Posterior vena cava (tissue), 2 donors: ENCODE measurements at regions of chr1 and their contacts with region 1.

Region 1: GRCh38 chr1:84758968-84759491 is 68.8 kb upstream of the SSX2IP start:
- DNase-seq: no peak

Region 2: GRCh38 chr1:82819234-82819633 is 1939.8 kb before region 1 on chr1:
- intact Hi-C with region 1: loop called in 1 of 2 experiments (anchors 5 kb)
- DNase-seq: no peak

Region 3: DNA sequence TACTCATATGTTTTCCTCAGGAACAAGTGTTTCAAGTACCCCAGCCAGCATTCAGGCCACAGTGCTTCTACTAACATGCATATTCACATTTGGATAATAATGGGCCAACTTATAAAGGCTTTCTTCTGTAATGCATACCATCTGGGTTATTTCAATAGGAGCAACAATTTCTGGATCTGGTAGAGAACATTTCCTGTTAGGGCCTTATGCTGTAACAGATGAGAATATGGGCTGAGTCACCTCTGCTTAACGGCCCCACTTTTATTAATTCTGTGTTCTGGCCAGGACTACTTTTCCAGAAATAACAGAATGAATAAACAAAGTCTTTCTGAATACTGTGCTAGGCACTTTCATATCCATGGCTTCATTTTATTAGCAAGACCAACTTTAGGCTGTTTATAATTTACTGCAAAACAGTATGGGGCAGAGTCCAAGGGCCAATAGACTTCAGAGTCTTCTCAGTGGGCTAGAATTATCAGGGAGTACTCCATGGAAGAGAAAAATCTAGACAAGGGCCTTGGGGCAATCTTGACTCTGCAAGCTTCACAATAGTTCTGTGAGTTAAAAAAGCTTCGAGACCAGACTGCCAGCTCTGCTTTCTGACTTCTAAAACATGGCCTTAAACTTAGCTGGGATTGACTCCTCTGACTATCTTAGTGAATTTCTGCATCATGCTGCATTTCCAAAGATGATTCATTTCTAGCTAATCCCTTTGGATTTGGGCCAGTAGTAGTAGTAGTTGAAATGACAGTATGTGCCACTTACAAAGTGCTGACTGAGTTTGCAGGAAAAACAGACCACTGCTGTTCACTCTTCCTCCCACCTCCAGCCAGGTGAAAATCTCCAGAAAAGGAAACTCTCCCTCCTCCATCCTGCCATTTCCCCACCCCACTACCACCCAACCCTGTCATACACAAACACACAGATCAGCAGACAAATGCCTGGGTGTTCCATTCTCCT is 60.6 kb before region 1 on chr1:
- intact Hi-C with region 1: no loop called
- DNase-seq: no peak